Activated naive CD4-positive, alpha-beta T cell treated with anti-CD3 and anti-CD28 coated beads for 36 hours (primary cell): ENCODE measurements at regions of chr12 and their contacts with region 1.

Region 1: DNA sequence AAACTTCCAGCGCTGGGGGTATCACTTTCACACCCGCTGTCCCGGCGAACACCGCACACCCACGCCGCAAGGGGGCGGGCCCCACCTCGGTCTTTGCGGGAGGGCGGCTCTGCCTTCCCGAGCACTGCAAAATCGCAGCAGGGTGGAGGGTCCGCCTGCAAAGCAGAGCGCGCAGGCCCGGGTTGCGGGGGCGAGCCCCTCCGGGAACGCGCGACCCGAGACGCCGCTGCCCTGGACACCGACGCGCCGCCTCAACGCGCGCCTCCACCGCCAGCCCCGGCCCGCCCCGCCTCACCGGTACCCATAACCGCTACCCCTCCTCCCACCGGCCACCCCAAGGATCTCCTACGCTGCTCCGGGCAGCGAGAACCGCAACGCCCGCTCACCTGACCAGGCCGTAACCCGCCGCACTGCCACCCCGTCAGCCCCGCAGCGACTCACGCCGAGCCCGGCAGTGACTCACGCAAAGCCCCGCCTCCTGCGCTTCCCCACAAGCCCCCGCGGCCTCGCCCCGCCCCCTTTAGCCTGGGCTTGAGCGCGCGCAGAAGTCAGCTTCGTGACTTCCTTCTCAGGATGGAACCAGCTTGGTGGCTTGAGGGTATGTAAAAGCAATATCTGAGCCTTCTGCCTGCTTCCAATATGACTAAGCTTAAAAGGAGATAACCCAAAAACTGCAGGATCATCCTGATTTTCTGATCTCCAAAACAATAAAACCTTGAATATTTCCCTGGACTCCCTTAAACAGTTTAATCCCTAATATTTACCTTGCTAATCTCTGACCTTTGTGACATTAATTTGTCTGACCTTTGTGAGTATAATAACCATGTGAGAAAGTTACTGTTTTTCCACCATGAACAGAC is at the start of gene RPAP3:
- DNase-seq: peak; percentile 99
- H3K4me3 Mint-ChIP-seq: peak within 1 kb of the TSS; percentile 93
- H3K27ac Mint-ChIP-seq: peak within 1 kb of the TSS; percentile 98
- H3K4me1 Mint-ChIP-seq: peaks cover 49% of the 10 kb centered on the region
- H3K27me3 Mint-ChIP-seq: no peaks in the 10 kb centered on the region
- total RNA-seq, gene RPAP3: 46.2 to 46.7 TPM

Region 2: DNA sequence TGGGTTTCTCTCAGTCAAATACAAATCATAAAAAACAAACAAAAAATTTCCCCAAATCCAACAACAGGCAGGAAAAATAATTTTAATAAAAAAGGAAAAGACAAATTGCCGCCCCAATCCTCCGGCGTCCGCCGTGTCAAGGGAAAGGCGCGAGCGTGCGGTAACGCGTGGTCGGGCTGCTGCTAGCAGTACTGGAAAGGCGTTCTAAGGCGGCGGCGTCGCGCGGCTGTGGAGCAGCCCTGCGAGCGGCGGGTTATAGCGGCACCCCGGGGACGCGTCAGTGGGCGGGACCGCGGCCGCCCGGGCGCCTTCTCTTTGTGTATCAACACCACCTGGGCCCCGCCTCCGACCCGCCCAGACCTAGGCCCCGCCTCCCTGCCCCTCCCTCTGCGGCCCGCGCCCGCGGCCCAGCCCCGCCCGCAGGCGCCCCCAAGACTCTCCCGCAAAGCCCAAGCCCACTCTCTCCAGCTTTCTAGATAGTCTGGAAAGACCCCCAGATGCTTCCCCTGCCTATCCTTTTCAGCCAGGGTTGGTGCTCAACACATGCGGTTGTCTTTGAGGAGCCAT is 1333.2 kb before region 1 on chr12 and contains the start of gene SLC38A2:
- CTCF ChIA-PET with region 1: no interaction called
- intact Hi-C with region 1: loop called (anchors 5 kb)
- DNase-seq: peak; percentile 97
- H3K4me3 Mint-ChIP-seq: peak within 1 kb of the TSS; percentile 96
- H3K27ac Mint-ChIP-seq: peak within 1 kb of the TSS; percentile 98
- H3K4me1 Mint-ChIP-seq: peaks cover 51% of the 10 kb centered on the region
- H3K27me3 Mint-ChIP-seq: no peaks in the 10 kb centered on the region
- total RNA-seq, gene SLC38A2: 196 to 206 TPM

Region 3: DNA sequence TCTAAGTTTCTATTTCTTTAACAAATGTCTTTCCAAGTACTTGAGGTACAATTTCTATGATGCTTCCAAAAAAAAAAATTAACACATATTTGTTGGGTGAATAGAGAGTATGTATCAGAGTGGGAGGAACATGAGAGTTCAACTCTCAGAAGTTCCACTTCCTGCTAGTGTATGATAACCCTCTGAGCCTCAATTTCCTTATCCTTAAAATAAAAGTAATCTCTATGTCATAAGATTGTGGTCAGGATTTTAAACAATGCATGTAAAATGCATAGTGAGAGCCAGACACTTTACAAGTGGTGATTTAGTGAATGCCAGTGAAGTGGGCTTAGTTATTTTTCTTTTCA is 355.8 kb before region 1 on chr12:
- CTCF ChIA-PET with region 1: no interaction called
- intact Hi-C with region 1: loop called (anchors 5 kb)
- DNase-seq: no peak
- H3K4me3 Mint-ChIP-seq: peak overlapping the region; percentile 67
- H3K27ac Mint-ChIP-seq: peak overlapping the region; percentile 94
- H3K4me1 Mint-ChIP-seq: peaks cover 85% of the 10 kb centered on the region
- H3K27me3 Mint-ChIP-seq: no peaks in the 10 kb centered on the region

Region 4: GRCh38 chr12:47651368-47652254 is 54.2 kb before region 1 on chr12:
- CTCF ChIA-PET with region 1: interaction called, 3 read pairs
- intact Hi-C with region 1: loop called (anchors 5 kb)
- DNase-seq: peak; percentile 70
- H3K4me3 Mint-ChIP-seq: no peak overlapping the region
- H3K27ac Mint-ChIP-seq: peak overlapping the region; percentile 26
- H3K4me1 Mint-ChIP-seq: peaks cover 18% of the 10 kb centered on the region
- H3K27me3 Mint-ChIP-seq: no peaks in the 10 kb centered on the region

Region 5: DNA sequence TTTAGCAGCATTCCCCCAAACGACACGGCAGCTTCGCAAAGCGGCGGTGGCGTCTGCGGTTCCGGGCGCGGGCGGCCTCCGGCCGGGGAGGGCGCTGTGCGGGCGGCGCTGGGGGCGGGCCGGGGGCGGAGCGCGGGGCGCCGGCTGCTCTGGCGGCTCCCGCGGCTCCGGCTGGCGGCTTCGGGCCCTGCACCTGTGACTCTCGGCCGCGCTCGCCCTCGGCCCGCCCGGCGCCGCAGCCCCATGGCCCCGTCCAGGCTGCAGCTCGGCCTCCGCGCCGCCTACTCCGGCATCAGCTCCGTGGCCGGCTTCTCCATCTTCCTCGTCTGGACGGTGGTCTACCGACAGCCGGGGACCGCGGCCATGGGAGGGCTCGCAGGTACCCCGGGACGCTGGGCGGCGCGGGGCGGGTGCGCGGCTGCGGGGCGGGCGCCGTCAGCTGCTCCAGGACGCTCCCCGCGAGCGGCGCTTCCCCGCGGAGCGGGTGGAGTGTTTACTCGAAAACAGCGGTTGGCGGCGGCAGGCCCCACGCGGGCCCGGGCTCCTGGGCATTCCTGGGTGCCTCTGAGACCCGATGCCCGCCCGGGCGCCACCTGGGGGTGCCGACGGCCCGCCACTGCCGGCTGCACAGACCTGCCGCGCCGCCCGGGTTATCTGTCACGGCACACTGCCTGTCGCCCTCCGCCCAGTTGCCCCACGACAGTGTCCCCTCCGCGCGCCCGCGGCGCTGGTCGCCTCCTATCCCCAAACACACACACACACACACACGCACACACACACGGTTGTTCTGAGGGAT is 67.5 kb after region 1 on chr12 and contains the start of gene SLC48A1:
- CTCF ChIA-PET with region 1: interaction called, 11 read pairs
- intact Hi-C with region 1: loop called (anchors 2 kb)
- DNase-seq: peak; percentile 79
- H3K4me3 Mint-ChIP-seq: peak within 1 kb of the TSS; percentile 90
- H3K27ac Mint-ChIP-seq: peak within 1 kb of the TSS; percentile 13
- H3K4me1 Mint-ChIP-seq: peaks cover 28% of the 10 kb centered on the region
- H3K27me3 Mint-ChIP-seq: no peaks in the 10 kb centered on the region
- total RNA-seq, gene SLC48A1: 16.6 to 21.0 TPM

Region 6: DNA sequence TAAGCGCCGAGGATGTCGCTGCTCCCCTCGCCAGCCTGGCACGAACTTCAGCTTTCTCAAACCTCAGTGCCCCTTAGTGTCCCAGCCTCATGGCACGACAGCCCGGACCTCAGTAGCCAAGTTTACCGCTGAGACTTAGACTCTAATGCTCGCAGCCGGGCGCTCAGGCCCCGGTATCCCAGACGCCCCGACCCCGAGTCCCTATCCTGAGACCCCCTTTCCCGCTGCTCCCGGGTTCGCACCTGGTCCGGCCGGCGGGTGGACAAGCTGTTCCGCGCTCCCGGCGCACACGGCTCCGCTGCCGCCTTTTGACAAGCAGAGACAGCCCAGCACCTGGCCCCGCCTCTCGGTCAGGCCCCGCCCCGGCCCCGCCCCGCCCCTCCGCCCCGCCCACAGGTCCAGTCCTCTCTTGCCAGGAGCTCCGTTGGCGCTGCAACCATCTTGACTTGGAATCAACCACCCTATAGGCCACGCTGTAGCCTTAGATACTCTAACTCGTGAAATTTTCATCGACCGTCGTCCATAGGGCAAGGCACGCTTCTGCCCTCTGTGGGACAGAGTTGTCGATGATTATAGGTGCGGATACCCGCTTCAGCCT is 199.0 kb after region 1 on chr12 and contains the start of gene VDR:
- CTCF ChIA-PET with region 1: no interaction called
- intact Hi-C with region 1: loop called (anchors 2 kb)
- DNase-seq: peak; percentile 81
- H3K4me3 Mint-ChIP-seq: peak within 1 kb of the TSS; percentile 98
- H3K27ac Mint-ChIP-seq: peak within 1 kb of the TSS; percentile 93
- H3K4me1 Mint-ChIP-seq: peaks cover 42% of the 10 kb centered on the region
- H3K27me3 Mint-ChIP-seq: peaks cover 19% of the 10 kb centered on the region
- total RNA-seq, gene VDR: 56.4 to 57.7 TPM